Activated CD4-positive, alpha-beta T cell treated with anti-CD3 and anti-CD28 coated beads for 36 hours (primary cell): ENCODE measurements at regions of chr17 and their contacts with region 1.

Region 1: DNA sequence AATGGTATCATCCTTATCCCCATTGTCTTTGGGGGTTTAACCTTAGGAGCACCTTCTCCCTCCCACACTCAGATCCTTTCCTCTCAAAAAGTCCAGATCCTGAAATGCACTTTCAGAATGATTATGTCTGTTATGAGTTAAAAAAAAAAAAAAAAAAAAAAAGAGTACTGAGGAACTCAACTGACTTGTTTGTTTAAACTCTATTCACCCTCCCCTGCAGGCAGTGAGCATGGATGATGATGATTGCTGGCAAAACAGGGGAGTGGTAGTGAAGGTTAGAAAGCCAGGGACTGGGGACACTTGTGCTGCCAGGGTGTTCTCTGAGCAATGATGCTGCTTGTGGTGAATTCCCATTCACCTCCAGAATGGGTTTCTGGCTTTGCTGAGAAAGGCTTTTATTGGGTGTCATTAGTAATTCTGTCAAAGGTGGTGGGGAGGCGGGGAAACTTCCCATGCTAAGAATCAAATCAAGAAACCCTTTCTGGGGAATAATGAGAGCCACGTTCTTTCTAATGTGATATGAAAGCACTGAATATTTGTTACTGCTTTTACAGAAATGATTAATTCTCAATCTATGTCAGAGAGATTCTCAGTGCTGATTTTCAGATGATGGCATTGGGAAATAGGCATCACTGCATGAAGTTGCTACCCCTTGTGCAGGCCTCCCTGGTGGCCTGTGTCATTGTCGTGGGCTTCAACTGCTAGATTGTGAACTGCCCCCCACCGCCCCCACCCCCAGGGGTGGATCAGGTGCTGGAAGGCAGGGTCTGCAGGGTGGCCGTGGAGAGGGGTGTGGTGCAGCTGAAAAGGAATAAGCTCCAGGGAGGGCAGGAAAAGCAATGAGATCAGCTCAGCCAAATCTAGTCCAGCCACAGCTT is 14.1 kb downstream of the CCL4 start:
- DNase-seq: peak; percentile 77
- ATAC-seq: peak; percentile 92
- H3K4me3 Mint-ChIP-seq: peak overlapping the region; percentile 21
- H3K27ac Mint-ChIP-seq: peak overlapping the region; percentile 72
- H3K4me1 Mint-ChIP-seq: peaks cover 40% of the 10 kb centered on the region
- H3K27me3 Mint-ChIP-seq: peaks cover 22% of the 10 kb centered on the region

Region 2: DNA sequence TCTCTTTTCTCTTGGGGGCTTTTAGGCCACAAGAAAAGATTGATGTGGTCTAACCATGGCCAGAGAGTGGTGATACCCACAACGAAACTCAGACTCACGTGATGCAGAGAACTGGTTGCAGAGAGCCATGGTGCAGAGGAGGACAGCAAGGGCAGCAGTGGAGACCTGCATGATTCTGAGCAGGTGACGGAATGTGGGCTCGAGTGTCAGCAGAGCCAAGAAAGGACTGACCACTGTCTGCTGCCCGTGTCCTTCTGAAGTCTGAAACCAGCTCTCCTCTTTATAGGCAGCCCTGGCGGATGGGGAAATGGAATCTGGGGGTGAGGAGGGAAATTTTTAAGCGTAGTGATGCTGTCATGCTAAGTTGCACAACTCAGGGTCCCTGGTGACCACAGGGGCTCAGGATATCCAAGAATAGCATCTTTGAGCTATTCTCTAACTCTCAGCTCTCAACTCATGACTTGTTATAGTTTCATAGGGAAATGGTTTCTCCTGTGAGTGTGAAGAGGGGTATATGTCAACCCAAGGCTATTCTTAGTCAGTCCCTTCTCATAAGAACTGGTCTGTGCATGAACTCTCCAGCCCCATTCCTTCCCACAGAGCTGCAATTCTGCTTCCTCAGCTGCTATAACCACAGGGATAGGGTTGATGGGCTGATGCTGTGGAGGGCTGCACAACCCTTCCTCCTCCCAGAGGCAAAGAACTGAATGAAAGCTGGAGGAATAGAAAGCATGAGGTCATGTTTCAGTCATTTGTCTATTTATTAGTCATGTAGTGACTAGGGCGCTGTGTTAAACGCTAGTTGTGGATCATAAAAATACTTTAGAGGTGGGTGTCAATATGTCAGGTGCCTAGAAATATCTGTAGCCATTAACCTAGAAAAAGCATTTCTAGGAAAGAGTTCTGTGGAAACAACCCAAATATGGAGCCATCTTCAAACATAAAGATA is 27.6 kb before region 1 on chr17 and contains the start of gene CCL3:
- CTCF ChIA-PET with region 1: interaction called, 15 read pairs
- POLR2A ChIA-PET with region 1: interaction called, 37 read pairs
- intact Hi-C with region 1: loop called (anchors 1 kb)
- DNase-seq: peak; percentile 67
- ATAC-seq: peak; percentile 75
- H3K4me3 Mint-ChIP-seq: peak within 1 kb of the TSS; percentile 50
- H3K27ac Mint-ChIP-seq: peak within 1 kb of the TSS; percentile 62
- H3K4me1 Mint-ChIP-seq: peaks cover 45% of the 10 kb centered on the region
- H3K27me3 Mint-ChIP-seq: peaks cover 22% of the 10 kb centered on the region
- total RNA-seq, gene CCL3: 287 to 296 TPM